Naive thymus-derived CD4-positive, alpha-beta T cell (primary cell): ENCODE measurements at regions of chr2 and their contacts with region 1.

Region 1: GRCh38 chr2:25041928-25042320 is at the start of gene EFR3B:
- DNase-seq: peak; percentile 77 to 88 (median 86)
- ATAC-seq: peak; percentile 99
- H3K4me3 ChIP-seq: peak within 1 kb of the TSS; percentile 73
- H3K4me3 Mint-ChIP-seq: peak within 1 kb of the TSS; percentile 79 to 91 (median 89)
- H3K27ac ChIP-seq: peak within 1 kb of the TSS; percentile 18
- H3K27ac Mint-ChIP-seq: peak within 1 kb of the TSS in 6 of 9 donors; percentile 8 to 88 (median 54)
- H3K4me1 ChIP-seq: peaks cover 13 to 17% of the 10 kb centered on the region in 2 donors
- H3K4me1 Mint-ChIP-seq: peaks cover 18 to 30% (median 20%) of the 10 kb centered on the region in 7 donors
- H3K27me3 ChIP-seq: peaks cover 7 to 8% of the 10 kb centered on the region in 2 donors
- H3K27me3 Mint-ChIP-seq: peaks cover 34 to 59% (median 37%) of the 10 kb centered on the region in 5 donors
- total RNA-seq, gene EFR3B: 0.05 to 0.08 (median 0.07) TPM in 3 of 5 experiments, not detected in the others

Region 2: GRCh38 chr2:24490674-24491625 is 551.0 kb before region 1 on chr2 and contains the start of gene NCOA1:
- CTCF ChIA-PET with region 1: no interaction called
- POLR2A ChIA-PET with region 1: no interaction called
- intact Hi-C with region 1: loop called in 1 of 2 experiments (anchors 5 kb)
- DNase-seq: peak; percentile 82 to 92 (median 90)
- ATAC-seq: peak; percentile 91
- H3K4me3 ChIP-seq: peak within 1 kb of the TSS; percentile 63
- H3K4me3 Mint-ChIP-seq: peak within 1 kb of the TSS; percentile 80 to 95 (median 90)
- H3K27ac ChIP-seq: peak within 1 kb of the TSS; percentile 93
- H3K27ac Mint-ChIP-seq: peak within 1 kb of the TSS; percentile 87 to 98 (median 93)
- H3K4me1 ChIP-seq: peaks cover 26 to 48% of the 10 kb centered on the region in 2 donors
- H3K4me1 Mint-ChIP-seq: peaks cover 46 to 62% (median 59%) of the 10 kb centered on the region in 7 donors
- H3K27me3 ChIP-seq: no peaks in the 10 kb centered on the region
- H3K27me3 Mint-ChIP-seq: peaks cover 0 to 11% (median 0%) of the 10 kb centered on the region in 5 donors
- total RNA-seq, gene NCOA1: 20.9 to 72.8 (median 46.6) TPM

Region 3: DNA sequence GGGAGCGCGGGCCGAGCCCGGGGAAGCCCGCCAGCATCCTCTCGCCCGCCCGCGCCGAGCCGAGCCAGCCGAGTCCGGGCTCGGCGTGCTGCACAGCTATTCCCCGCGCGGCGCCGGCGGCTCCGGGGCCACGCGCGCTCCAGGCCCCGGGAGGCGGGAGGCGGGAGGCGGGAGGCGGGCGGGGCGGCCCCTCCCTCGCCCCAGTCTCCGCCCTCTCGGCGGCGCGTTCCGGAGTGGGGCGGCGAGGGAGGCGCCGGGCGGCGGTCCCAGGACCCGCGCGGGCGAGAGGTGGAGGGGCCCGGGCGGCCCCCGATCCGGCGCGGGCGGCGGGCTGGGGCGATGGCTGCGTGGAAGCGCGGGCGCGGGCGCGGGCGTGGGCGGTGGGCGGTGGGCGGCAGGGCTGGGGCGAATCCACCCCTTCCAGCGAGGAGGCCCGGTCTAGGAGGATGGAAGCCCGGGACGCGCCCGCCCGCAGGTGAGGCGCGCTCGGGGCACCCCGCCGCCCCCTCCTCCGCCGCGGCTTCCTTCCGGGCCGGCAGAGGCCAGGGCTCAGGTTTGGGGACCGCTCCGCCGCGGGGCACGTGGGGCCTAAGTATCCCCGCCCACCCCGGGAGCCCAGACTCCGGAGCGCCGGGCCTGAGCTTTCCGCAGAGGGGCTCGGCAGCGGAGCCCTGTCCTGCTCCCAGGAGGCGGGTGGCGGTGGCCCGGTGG is 121.7 kb before region 1 on chr2 and contains the start of gene ADCY3:
- CTCF ChIA-PET with region 1: no interaction called
- POLR2A ChIA-PET with region 1: no interaction called
- intact Hi-C with region 1: loop called (anchors 5 kb)
- DNase-seq: peak; percentile 24 to 76 (median 48)
- ATAC-seq: peak; percentile 74
- H3K4me3 ChIP-seq: peak within 1 kb of the TSS; percentile 40
- H3K4me3 Mint-ChIP-seq: peak within 1 kb of the TSS; percentile 85 to 93 (median 92)
- H3K27ac ChIP-seq: peak within 1 kb of the TSS; percentile 55
- H3K27ac Mint-ChIP-seq: peak within 1 kb of the TSS; percentile 45 to 82 (median 67)
- H3K4me1 ChIP-seq: peaks cover 16 to 17% of the 10 kb centered on the region in 2 donors
- H3K4me1 Mint-ChIP-seq: peaks cover 18 to 40% (median 32%) of the 10 kb centered on the region in 7 donors
- H3K27me3 ChIP-seq: no peaks in the 10 kb centered on the region
- H3K27me3 Mint-ChIP-seq: peaks cover 0 to 4% (median 0%) of the 10 kb centered on the region in 5 donors
- total RNA-seq, gene ADCY3: 4.4 to 44.7 (median 18.7) TPM

Region 4: GRCh38 chr2:25131567-25132298 is 89.8 kb after region 1 on chr2:
- CTCF ChIA-PET with region 1: no interaction called
- POLR2A ChIA-PET with region 1: no interaction called
- intact Hi-C with region 1: loop called (anchors 1 to 2 kb)
- DNase-seq: peak in 1 of 9 donors; percentile 32
- ATAC-seq: peak; percentile 44
- H3K4me3 ChIP-seq: no peak overlapping the region
- H3K4me3 Mint-ChIP-seq: peak overlapping the region; percentile 20 to 82 (median 74)
- H3K27ac ChIP-seq: no peak overlapping the region
- H3K27ac Mint-ChIP-seq: peak overlapping the region in 1 of 9 donors; percentile 62
- H3K4me1 ChIP-seq: peaks cover 0 to 6% of the 10 kb centered on the region in 2 donors
- H3K4me1 Mint-ChIP-seq: peaks cover 6 to 16% (median 12%) of the 10 kb centered on the region in 7 donors
- H3K27me3 ChIP-seq: peaks cover 0 to 17% of the 10 kb centered on the region in 2 donors
- H3K27me3 Mint-ChIP-seq: peaks cover 52 to 65% (median 58%) of the 10 kb centered on the region in 5 donors